Brain microvascular endothelial cell (primary cell): ENCODE measurements at regions of chr1 and their contacts with region 1.

Region 1: DNA sequence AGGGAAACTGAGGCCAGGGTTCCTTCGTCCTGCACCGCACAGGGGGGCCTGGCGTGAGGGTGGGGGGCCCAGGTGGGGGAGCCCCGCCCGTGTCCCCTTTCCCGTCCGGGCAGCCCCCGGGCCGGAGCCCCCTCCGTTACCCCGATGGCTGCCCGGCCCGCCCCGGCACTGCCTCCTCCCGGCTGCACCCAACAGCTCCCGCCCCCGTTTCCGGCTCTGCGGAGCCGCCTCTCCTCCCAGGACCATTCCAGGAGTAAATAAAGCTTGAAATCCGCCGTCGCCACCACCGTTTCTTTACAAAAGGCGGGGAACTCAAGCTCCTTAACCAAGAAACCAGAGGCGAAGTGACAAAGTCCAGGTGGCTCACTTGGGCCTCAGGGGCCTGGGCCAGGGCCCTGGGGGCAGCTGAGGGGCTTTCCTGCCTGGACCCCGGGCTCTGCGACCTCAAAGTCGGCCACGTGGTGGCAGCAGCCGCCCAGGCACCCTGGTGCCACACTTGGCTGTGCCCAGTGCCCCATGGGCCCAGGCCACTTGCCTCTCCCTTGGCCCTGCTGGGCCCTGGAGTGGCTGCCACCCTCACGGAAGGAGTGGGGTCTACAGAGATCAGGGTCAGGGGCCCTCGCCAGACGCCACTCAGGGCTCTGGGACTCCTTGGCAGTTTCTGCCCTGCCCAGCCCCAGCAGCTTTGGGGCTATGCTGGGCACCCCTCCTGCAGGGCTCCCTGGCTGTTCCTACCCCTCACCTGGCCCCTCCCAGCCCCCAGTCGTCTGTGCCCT is 514 bp upstream of the FAAP20 start:
- DNase-seq: peak; percentile 77
- H3K4me3 ChIP-seq: peak overlapping the region; percentile 62
- H3K27ac ChIP-seq: peak overlapping the region; percentile 79
- H3K27me3 ChIP-seq: no peaks in the 10 kb centered on the region
- CTCF ChIP-seq: peak; percentile 91

Region 2: GRCh38 chr1:2031546-2032540 is 163.2 kb before region 1 on chr1:
- in situ Hi-C with region 1: no loop called
- DNase-seq: no peak
- H3K4me3 ChIP-seq: no peak overlapping the region
- H3K27ac ChIP-seq: no peak overlapping the region
- H3K27me3 ChIP-seq: peaks cover 2% of the 10 kb centered on the region
- CTCF ChIP-seq: no peak

Region 3: GRCh38 chr1:2352840-2353550 is 157.9 kb after region 1 on chr1:
- in situ Hi-C with region 1: loop called (anchors 10 kb)
- DNase-seq: no peak
- H3K4me3 ChIP-seq: no peak overlapping the region
- H3K27ac ChIP-seq: no peak overlapping the region
- H3K27me3 ChIP-seq: no peaks in the 10 kb centered on the region
- CTCF ChIP-seq: no peak